Activated CD4-positive, alpha-beta T cell treated with anti-CD3 and anti-CD28 coated beads for 36 hours (primary cell): ENCODE measurements at regions of chr17 and their contacts with region 1.

Region 1: GRCh38 chr17:4215882-4216570 is 47.8 kb downstream of the ANKFY1 start:
- DNase-seq: no peak
- ATAC-seq: no peak
- H3K4me3 Mint-ChIP-seq: no peak overlapping the region
- H3K27ac Mint-ChIP-seq: peak overlapping the region; percentile 3
- H3K4me1 Mint-ChIP-seq: peaks cover 7% of the 10 kb centered on the region
- H3K27me3 Mint-ChIP-seq: no peaks in the 10 kb centered on the region

Region 2: GRCh38 chr17:4199818-4200402 is 16.1 kb before region 1 on chr17:
- CTCF ChIA-PET with region 1: interaction called, 25 read pairs
- POLR2A ChIA-PET with region 1: interaction called, 4 read pairs
- intact Hi-C with region 1: no loop called
- DNase-seq: peak; percentile 60
- ATAC-seq: peak; percentile 79
- H3K4me3 Mint-ChIP-seq: no peak overlapping the region
- H3K27ac Mint-ChIP-seq: no peak overlapping the region
- H3K4me1 Mint-ChIP-seq: peaks cover 19% of the 10 kb centered on the region
- H3K27me3 Mint-ChIP-seq: no peaks in the 10 kb centered on the region

Region 3: DNA sequence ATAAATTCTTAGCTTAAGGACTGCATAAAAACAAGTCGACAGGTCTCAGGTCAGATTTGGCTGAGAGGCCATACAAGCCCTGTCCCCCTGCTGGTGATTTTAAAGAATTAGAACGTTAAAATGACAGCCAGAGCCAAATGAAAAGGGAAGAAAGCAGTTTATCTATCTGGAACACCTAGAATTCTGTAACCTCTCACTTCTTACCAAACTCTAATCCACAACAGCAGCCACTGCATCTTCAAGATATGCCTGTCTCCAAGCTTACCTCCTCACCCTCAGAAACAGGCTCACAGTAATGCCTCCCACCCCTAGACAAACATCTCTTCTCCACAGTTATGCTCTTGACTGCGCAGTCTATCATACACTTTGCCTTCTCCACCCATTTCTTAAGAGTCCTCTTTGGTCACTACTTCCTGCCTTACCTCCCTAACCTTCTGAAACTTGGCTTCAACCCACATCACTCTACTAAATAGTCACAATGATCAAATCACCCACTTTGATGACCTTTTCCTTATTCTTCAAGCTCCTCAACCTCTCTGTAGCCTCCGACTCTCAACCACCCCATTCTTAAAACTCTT is 33.5 kb after region 1 on chr17:
- CTCF ChIA-PET with region 1: interaction called, 17 read pairs
- POLR2A ChIA-PET with region 1: no interaction called
- intact Hi-C with region 1: no loop called
- DNase-seq: no peak
- ATAC-seq: no peak
- H3K4me3 Mint-ChIP-seq: no peak overlapping the region
- H3K27ac Mint-ChIP-seq: no peak overlapping the region
- H3K4me1 Mint-ChIP-seq: peaks cover 42% of the 10 kb centered on the region
- H3K27me3 Mint-ChIP-seq: no peaks in the 10 kb centered on the region

Region 4: GRCh38 chr17:4304417-4305027 is 88.5 kb after region 1 on chr17:
- CTCF ChIA-PET with region 1: interaction called, 9 read pairs
- POLR2A ChIA-PET with region 1: no interaction called
- intact Hi-C with region 1: loop called (anchors 1 kb)
- DNase-seq: peak; percentile 73
- ATAC-seq: peak; percentile 88
- H3K4me3 Mint-ChIP-seq: no peak overlapping the region
- H3K27ac Mint-ChIP-seq: no peak overlapping the region
- H3K4me1 Mint-ChIP-seq: peaks cover 13% of the 10 kb centered on the region
- H3K27me3 Mint-ChIP-seq: no peaks in the 10 kb centered on the region

Region 5: DNA sequence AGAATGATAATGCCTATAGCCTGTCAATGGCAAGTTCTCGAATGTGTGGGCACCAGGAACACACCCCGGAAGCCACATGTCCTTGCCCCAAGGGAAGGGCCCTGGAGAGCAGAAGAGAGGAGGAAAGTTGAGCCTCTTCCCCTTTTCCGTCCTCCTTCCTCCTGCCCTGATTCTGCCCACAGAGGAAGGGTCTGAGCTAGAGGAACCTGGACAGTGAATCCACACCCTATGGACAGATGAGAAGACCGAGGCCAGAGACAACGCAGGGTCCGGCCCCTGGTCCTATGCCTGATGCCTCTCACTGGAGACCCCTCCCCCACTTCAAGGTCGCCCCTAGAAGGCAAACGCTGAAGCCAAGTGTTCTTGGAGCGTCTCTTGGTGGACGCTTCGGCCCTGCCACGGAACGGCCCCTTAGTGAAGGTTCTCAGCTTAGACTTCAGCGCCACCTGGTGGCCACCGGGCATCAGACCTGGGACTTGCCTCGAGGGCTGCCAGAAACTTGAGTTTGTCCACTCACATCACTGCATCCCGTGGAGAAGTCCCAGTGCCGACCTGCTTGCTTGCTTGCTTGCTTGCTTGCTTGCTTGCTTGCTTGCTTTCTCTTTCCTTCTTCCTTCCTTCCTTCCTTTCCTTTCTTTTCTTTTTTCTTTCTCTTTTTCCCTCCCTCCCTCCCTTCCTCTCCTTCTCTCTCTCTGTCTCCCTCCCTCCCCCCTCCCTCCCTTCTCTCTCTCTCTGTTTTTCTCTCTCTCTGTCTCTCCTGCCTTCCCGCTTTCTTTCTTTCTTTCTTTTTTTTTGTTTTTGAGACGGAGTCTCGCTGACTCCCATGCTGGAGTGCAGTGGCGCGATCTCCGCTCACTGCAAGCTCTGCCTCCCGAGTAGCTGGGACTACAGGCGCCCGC is 197.2 kb after region 1 on chr17:
- CTCF ChIA-PET with region 1: interaction called, 74 read pairs
- POLR2A ChIA-PET with region 1: no interaction called
- intact Hi-C with region 1: loop called (anchors 1 kb)
- DNase-seq: peak; percentile 96
- ATAC-seq: peak; percentile 99
- H3K4me3 Mint-ChIP-seq: peak overlapping the region; percentile 23
- H3K27ac Mint-ChIP-seq: peak overlapping the region; percentile 42
- H3K4me1 Mint-ChIP-seq: peaks cover 5% of the 10 kb centered on the region
- H3K27me3 Mint-ChIP-seq: no peaks in the 10 kb centered on the region